Caco-2 (cell line): ENCODE measurements at regions of chrX and their contacts with region 1.

Region 1: DNA sequence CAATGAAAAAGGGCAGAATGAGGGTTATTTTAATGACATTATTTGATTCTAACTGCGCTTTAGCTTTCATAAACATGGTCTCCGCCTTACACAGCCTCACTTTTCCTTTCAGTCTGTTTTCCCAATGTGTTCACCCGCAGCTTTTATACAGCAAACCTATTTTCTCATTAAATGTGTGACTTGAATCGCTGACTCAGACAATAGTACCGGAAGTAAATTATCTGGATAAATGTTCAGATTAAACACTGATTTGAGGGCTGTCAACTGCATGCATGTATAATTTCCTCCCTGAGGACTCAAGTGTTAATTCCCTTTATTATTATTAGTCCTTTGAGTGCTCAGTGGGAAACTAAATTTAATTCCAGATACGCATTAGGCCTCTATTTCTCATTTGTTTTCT is 117.3 kb downstream of the FAM133A start:
- DNase-seq: no peak
- H3K4me3 ChIP-seq: no peak overlapping the region
- H3K4me3 Mint-ChIP-seq: no peak overlapping the region
- H3K27ac Mint-ChIP-seq: no peak overlapping the region
- H3K4me1 ChIP-seq: no peaks in the 10 kb centered on the region
- H3K4me1 Mint-ChIP-seq: no peaks in the 10 kb centered on the region
- H3K27me3 ChIP-seq: no peaks in the 10 kb centered on the region
- H3K27me3 Mint-ChIP-seq: no peaks in the 10 kb centered on the region
- CTCF ChIP-seq: no peak

Region 2: DNA sequence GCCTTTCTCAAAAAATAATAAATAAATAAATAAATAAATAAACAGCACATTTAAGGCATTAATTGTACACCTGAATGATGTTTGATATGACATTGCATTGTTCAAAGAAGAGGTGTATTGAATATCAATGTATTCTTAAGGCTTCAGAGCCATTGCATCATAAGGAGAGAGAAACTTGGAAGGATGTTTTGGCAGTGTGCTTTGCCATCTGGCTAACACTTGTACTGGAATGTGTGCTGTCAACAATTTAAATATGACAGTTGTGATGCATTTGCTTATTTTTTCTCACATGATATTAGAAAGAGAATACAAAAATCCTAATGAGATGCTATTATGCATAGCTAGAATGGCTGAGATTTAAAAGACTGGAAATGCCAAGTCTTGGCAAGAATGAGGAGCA is 49.5 kb before region 1 on chrX:
- CTCF ChIA-PET with region 1: no interaction called
- POLR2A ChIA-PET with region 1: no interaction called
- intact Hi-C with region 1: loop called (anchors 2 kb)
- DNase-seq: no peak
- H3K4me3 ChIP-seq: no peak overlapping the region
- H3K4me3 Mint-ChIP-seq: no peak overlapping the region
- H3K27ac Mint-ChIP-seq: no peak overlapping the region
- H3K4me1 ChIP-seq: no peaks in the 10 kb centered on the region
- H3K4me1 Mint-ChIP-seq: no peaks in the 10 kb centered on the region
- H3K27me3 ChIP-seq: no peaks in the 10 kb centered on the region
- H3K27me3 Mint-ChIP-seq: no peaks in the 10 kb centered on the region
- CTCF ChIP-seq: no peak

Region 3: DNA sequence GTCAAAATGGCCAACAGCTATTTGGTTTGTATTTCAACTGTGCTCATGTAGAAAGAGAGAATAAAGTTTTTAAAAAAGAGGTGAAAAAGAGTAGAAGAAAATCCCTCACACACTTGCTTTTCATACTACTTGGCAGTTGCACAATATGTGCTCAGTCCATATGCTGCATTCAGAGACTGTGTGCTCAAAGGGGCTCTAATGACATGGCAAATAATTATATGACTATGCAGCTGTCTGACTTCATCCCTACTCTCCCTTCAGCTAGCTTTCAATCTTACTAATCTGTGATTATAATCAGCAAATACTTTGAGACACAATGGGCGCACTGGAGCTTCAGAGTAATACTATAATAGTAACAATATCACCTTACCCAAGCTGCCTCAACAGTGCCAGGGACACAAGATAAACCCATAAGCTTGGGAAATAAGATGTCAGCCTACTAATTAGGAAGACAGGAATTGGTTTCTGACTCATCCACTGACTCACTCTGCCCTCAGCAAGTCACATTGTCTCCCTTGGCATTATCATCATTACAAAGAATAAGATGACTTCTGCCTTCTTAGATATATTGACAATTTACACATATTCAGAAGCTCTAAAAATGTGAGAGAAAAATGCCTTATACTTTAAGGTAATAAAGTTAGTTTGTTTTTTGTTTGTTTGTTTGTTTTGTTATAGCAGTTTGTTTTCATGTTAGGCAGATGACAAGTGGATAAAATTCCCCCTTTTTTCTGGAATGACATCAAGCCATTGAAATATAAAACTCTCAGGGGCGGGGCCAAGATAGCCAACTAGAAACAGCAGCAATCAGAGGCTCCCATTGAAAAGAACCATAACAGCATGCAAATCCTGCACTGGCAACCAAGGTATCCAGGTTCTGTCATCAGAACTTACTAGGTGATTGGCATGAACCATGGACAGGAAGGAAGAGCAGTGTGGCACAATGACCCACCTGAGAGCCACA is 194.3 kb after region 1 on chrX:
- CTCF ChIA-PET with region 1: no interaction called
- POLR2A ChIA-PET with region 1: no interaction called
- intact Hi-C with region 1: no loop called
- DNase-seq: no peak
- H3K4me3 ChIP-seq: no peak overlapping the region
- H3K4me3 Mint-ChIP-seq: no peak overlapping the region
- H3K27ac Mint-ChIP-seq: no peak overlapping the region
- H3K4me1 ChIP-seq: no peaks in the 10 kb centered on the region
- H3K4me1 Mint-ChIP-seq: no peaks in the 10 kb centered on the region
- H3K27me3 ChIP-seq: no peaks in the 10 kb centered on the region
- H3K27me3 Mint-ChIP-seq: no peaks in the 10 kb centered on the region
- CTCF ChIP-seq: no peak

Region 4: GRCh38 chrX:94045724-94046123 is 254.4 kb after region 1 on chrX:
- CTCF ChIA-PET with region 1: no interaction called
- POLR2A ChIA-PET with region 1: no interaction called
- intact Hi-C with region 1: no loop called
- DNase-seq: no peak
- H3K4me3 ChIP-seq: no peak overlapping the region
- H3K4me3 Mint-ChIP-seq: no peak overlapping the region
- H3K27ac Mint-ChIP-seq: no peak overlapping the region
- H3K4me1 ChIP-seq: no peaks in the 10 kb centered on the region
- H3K4me1 Mint-ChIP-seq: no peaks in the 10 kb centered on the region
- H3K27me3 ChIP-seq: no peaks in the 10 kb centered on the region
- H3K27me3 Mint-ChIP-seq: no peaks in the 10 kb centered on the region
- CTCF ChIP-seq: no peak